ENCODE measurements at regions of chr15 and their contacts with region 1.

Region 1: DNA sequence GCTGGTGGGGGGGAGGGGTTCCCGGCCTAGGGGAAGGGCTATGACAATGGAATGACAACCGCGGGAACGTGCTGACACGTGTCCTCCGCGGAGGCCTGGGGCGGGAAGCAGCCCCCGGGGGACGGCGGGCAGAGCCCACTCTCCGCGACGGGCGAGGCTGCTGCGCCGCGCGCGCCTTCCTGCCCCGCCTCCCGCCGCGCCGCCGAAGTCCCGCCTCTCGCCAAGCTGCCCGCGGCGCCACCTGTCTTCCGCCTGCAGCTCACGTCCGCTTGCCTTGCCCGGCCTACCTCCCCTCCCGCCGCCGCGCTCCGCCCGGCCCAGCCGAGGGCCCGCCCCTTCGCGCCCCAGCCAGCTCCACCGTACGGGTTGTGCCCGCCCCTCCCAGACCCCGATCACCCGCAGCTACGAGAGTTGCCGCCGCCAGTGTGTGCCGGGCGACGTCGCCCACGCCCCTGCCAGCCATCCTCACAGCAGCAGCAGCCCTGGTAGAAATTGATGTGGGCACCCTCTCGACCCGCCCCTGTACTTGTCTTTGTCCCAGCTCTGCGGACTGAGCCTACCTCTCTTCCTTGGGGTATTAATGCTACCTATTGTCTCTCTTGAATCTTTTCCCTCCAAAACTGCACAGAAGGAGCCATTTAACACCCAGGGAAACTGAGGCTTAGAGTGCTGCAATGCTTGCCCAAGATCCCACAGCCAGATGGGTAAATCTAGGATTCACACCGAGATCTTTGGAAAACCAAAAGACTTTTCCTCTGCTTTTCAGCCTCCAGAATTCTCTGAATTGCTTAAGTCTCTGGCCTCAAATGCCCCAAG is at the start of gene PARP16:
- H3K4me3 ChIP-seq: peak within 1 kb of the TSS; percentile 69
- H3K27ac ChIP-seq: peak within 1 kb of the TSS; percentile 64
- H3K4me1 ChIP-seq: no peaks in the 10 kb centered on the region; the same call in none of the 2 replicates
- CTCF ChIP-seq: 0 out of 2 replicates have a peak, but pooled peaks have one; percentile 38

Region 2: GRCh38 chr15:65184868-65185738 is 101.8 kb before region 1 on chr15 and contains the start of gene CLPX:
- CTCF ChIA-PET with region 1: interaction called, 3 read pairs
- POLR2A ChIA-PET with region 1: interaction called, 30 read pairs
- H3K4me3 ChIP-seq: peak within 1 kb of the TSS; percentile 91
- H3K27ac ChIP-seq: peak within 1 kb of the TSS; percentile 78
- H3K4me1 ChIP-seq: no peaks in the 10 kb centered on the region
- CTCF ChIP-seq: no peak

Region 3: DNA sequence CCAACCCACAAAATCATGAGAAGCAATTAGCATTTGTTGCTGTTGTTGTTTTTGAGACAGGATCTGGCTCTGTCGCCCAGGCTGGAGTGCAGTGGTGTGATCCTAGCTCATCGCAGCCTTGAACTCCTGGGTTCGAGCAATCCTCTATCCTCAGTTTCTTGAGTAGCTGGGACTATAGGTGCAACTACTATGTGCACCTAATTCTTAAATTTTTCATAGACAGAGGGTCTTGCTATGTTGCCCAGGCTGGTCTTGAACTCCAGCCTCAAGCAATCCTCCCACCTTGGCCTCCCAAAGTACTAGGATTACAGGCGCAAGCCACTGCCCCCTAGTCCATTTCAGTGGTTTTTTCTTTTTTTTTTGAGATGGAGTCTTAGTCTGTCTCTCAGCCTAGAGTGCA is 18.5 kb before region 1 on chr15:
- CTCF ChIA-PET with region 1: interaction called, 80 read pairs
- POLR2A ChIA-PET with region 1: interaction called, 4 read pairs
- H3K4me3 ChIP-seq: no peak overlapping the region
- H3K27ac ChIP-seq: no peak overlapping the region
- H3K4me1 ChIP-seq: no peaks in the 10 kb centered on the region
- CTCF ChIP-seq: no peak

Region 4: DNA sequence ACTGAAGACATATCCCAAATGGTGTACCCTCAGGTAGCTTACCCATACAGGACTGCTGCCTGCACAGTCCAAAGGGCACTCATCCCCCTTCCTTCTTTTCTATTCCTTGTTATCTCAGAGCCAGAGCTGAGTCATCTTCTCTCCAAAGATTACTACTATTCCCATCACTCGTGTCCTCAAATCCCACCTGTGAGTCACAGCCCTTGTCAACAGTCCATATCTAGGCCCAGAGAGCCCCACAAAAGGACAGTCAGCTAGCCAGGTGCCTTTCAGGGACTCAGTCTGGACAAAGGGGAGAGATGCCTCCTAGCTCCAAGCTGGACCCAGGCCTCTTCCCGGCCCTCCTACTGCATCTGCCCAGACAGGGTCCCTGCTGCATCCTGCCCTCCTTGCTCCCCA is 11.2 kb before region 1 on chr15:
- CTCF ChIA-PET with region 1: interaction called, 80 read pairs
- POLR2A ChIA-PET with region 1: interaction called, 11 read pairs
- H3K4me3 ChIP-seq: no peak overlapping the region
- H3K27ac ChIP-seq: peak overlapping the region; percentile 37; the same call in 1 of the 2 replicates
- H3K4me1 ChIP-seq: no peaks in the 10 kb centered on the region
- CTCF ChIP-seq: no peak

Region 5: DNA sequence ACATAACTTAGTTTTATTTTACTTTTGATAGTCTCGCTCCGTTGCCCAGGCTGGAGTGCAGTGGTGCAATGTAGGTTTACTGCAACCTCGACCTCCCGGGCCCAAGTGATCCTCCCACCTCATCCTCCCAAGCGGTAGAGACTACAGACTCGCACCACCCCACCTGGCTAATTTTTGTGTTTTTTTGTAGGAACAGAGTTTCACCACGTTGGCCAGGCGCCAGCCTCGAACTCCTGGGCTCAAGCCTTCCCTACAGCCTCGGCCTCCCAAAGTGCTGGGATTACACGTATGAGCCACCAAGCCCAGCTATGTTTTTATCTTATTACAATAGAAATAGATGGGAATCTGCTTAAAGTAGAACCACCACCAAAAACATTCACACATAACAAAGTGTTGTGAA is 11.8 kb after region 1 on chr15:
- CTCF ChIA-PET with region 1: interaction called, 35 read pairs
- POLR2A ChIA-PET with region 1: interaction called, 73 read pairs
- H3K4me3 ChIP-seq: no peak overlapping the region
- H3K27ac ChIP-seq: no peak overlapping the region
- H3K4me1 ChIP-seq: peaks cover 3% of the 10 kb centered on the region; the same call in 1 of the 2 replicates
- CTCF ChIP-seq: no peak

Region 6: DNA sequence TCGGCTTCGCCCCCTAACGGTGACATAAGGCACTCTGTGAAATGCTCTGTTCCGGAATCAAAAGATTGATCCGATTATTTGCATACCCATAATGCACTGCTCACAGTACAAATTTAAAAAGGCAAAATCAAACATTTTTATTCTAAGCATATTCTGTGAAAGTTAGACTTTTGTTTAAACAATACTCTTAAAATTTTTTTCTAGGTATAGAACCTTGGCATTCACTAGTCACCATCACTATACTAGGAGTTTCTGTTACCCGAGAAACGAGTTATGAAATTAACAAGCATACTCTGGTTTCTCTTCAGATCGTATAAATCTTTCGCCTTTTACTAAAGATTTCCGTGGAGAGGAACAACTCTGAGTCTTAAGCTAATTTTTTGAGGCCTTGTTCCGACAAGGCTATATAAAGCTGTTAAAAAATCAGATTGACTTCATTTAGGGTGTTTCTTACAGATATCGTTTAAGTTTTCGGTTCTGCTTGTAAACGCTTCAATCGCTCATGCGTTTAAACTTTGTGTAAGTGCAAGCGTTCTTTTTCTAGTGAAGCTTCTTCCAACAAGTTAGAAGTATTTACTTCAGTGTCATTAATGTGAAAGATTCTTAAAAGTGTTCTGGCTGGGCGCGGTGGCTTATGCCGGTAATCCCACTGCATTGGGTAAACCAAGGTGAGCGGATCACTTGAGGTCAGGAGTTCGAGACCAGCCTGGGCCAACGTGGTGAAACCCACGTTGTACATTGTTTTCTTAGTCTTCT is 17.7 kb after region 1 on chr15 and contains the start of gene RNU5B-1:
- CTCF ChIA-PET with region 1: interaction called, 6 read pairs
- POLR2A ChIA-PET with region 1: interaction called, 73 read pairs
- H3K4me3 ChIP-seq: peak within 1 kb of the TSS; percentile 41
- H3K27ac ChIP-seq: peak within 1 kb of the TSS; percentile 83
- H3K4me1 ChIP-seq: peaks cover 8% of the 10 kb centered on the region; the same call in 1 of the 2 replicates
- CTCF ChIP-seq: peak; percentile 89; the same call in 1 of the 2 replicates

Measured in HEK293 (cell line).